ENCODE measurements at regions of chr2 and their contacts with region 1.

Region 1: GRCh38 chr2:44740678-44741077 is 200.8 kb upstream of the SIX3 start:
- DNase-seq: no peak
- ATAC-seq: no peak
- H3K4me3 ChIP-seq: no peak overlapping the region
- H3K27ac ChIP-seq: no peak overlapping the region
- H3K4me1 ChIP-seq: peaks cover 29% of the 10 kb centered on the region
- H3K27me3 ChIP-seq: no peaks in the 10 kb centered on the region
- CTCF ChIP-seq: no peak
- EP300 ChIP-seq: no peak
- POLR2A ChIP-seq: no peak
- RAD21 ChIP-seq: no peak

Region 2: GRCh38 chr2:44941551-44942234 is 201.0 kb after region 1 on chr2 and contains the start of gene SIX3:
- CTCF ChIA-PET with region 1: no interaction called
- POLR2A ChIA-PET with region 1: no interaction called
- in situ Hi-C with region 1: no loop called
- intact Hi-C with region 1: loop called (anchors 10 kb)
- DNase-seq: no peak
- ATAC-seq: no peak
- H3K4me3 ChIP-seq: no peak within 1 kb of the TSS
- H3K27ac ChIP-seq: no peak within 1 kb of the TSS
- H3K4me1 ChIP-seq: peaks cover 20% of the 10 kb centered on the region
- H3K27me3 ChIP-seq: peaks cover 27 to 92% of the 10 kb centered on the region in 2 experiments
- CTCF ChIP-seq: no peak
- EP300 ChIP-seq: no peak
- POLR2A ChIP-seq: no peak
- RAD21 ChIP-seq: no peak
- total RNA-seq, gene SIX3: not detected in 2 replicates

Measured in HepG2 (cell line).